PC-3 (cell line): ENCODE measurements at regions of chr6 and their contacts with region 1.

Region 1: DNA sequence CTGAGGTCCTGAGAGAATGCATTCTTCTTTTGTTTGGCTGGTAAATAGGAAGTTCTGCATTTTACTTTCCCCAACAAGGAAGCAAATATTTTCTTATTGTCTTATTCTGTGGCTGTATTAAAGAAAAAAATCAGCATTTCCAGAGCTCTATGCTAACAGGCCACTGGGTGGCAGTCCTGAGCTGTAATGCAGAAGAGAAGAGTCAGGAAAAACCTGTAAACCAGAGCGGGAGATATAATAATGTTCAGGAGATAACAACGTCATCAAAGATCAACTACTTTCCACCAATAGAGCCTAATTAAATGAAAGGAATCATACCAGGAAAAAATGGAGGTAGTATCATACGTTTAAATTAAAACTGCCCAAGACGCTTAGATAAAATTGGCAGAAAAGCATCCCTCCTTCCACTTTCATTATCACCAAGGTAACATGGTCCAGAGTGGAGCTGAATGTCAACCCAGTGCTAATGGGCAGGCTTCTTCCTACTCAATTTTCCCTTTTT is 55.6 kb upstream of the CARMIL1 start:
- DNase-seq: peak; percentile 82
- ATAC-seq: peak; percentile 77
- H3K4me3 ChIP-seq: peak overlapping the region; percentile 49
- H3K27ac ChIP-seq: no peak overlapping the region
- H3K4me1 ChIP-seq: no peaks in the 10 kb centered on the region
- H3K27me3 ChIP-seq: no peaks in the 10 kb centered on the region
- CTCF ChIP-seq: peak; percentile 97

Region 2: GRCh38 chr6:25122001-25122400 is 101.5 kb before region 1 on chr6:
- CTCF ChIA-PET with region 1: no interaction called
- POLR2A ChIA-PET with region 1: no interaction called
- intact Hi-C with region 1: loop called (anchors 5 kb)
- DNase-seq: no peak
- ATAC-seq: no peak
- H3K4me3 ChIP-seq: no peak overlapping the region
- H3K27ac ChIP-seq: no peak overlapping the region
- H3K4me1 ChIP-seq: no peaks in the 10 kb centered on the region
- H3K27me3 ChIP-seq: no peaks in the 10 kb centered on the region
- CTCF ChIP-seq: no peak

Region 3: GRCh38 chr6:25173951-25174474 is 49.5 kb before region 1 on chr6:
- CTCF ChIA-PET with region 1: interaction called, 16 read pairs
- POLR2A ChIA-PET with region 1: no interaction called
- intact Hi-C with region 1: no loop called
- DNase-seq: peak; percentile 96
- ATAC-seq: peak; percentile 84
- H3K4me3 ChIP-seq: no peak overlapping the region
- H3K27ac ChIP-seq: peak overlapping the region; percentile 81
- H3K4me1 ChIP-seq: peaks cover 57% of the 10 kb centered on the region
- H3K27me3 ChIP-seq: no peaks in the 10 kb centered on the region
- CTCF ChIP-seq: no peak

Region 4: GRCh38 chr6:25202505-25202904 is 21.0 kb before region 1 on chr6:
- CTCF ChIA-PET with region 1: no interaction called
- POLR2A ChIA-PET with region 1: no interaction called
- intact Hi-C with region 1: no loop called
- DNase-seq: peak; percentile 45
- ATAC-seq: peak; percentile 22; the same call in 1 of the 2 replicates
- H3K4me3 ChIP-seq: no peak overlapping the region
- H3K27ac ChIP-seq: no peak overlapping the region
- H3K4me1 ChIP-seq: peaks cover 6% of the 10 kb centered on the region; the same call in 1 of the 2 replicates
- H3K27me3 ChIP-seq: no peaks in the 10 kb centered on the region
- CTCF ChIP-seq: no peak

Region 5: GRCh38 chr6:25278914-25279747 is 55.6 kb after region 1 on chr6 and contains the start of gene CARMIL1:
- CTCF ChIA-PET with region 1: interaction called, 3 read pairs
- POLR2A ChIA-PET with region 1: no interaction called
- intact Hi-C with region 1: loop called (anchors 1 kb)
- DNase-seq: peak; percentile 90
- ATAC-seq: peak; percentile 76
- H3K4me3 ChIP-seq: peak within 1 kb of the TSS; percentile 84
- H3K27ac ChIP-seq: peak within 1 kb of the TSS; percentile 67
- H3K4me1 ChIP-seq: peaks cover 34% of the 10 kb centered on the region
- H3K27me3 ChIP-seq: no peaks in the 10 kb centered on the region
- CTCF ChIP-seq: peak; percentile 82
- total RNA-seq, gene CARMIL1: 17.0 and 22.0 TPM in 2 replicates

Region 6: GRCh38 chr6:25556516-25556915 is 333.0 kb after region 1 on chr6:
- CTCF ChIA-PET with region 1: interaction called, 3 read pairs
- POLR2A ChIA-PET with region 1: no interaction called
- intact Hi-C with region 1: loop called (anchors 1 kb)
- DNase-seq: peak; percentile 88
- ATAC-seq: peak; percentile 72
- H3K4me3 ChIP-seq: no peak overlapping the region
- H3K27ac ChIP-seq: no peak overlapping the region
- H3K4me1 ChIP-seq: peaks cover 9% of the 10 kb centered on the region
- H3K27me3 ChIP-seq: no peaks in the 10 kb centered on the region
- CTCF ChIP-seq: peak; percentile 93

Region 7: DNA sequence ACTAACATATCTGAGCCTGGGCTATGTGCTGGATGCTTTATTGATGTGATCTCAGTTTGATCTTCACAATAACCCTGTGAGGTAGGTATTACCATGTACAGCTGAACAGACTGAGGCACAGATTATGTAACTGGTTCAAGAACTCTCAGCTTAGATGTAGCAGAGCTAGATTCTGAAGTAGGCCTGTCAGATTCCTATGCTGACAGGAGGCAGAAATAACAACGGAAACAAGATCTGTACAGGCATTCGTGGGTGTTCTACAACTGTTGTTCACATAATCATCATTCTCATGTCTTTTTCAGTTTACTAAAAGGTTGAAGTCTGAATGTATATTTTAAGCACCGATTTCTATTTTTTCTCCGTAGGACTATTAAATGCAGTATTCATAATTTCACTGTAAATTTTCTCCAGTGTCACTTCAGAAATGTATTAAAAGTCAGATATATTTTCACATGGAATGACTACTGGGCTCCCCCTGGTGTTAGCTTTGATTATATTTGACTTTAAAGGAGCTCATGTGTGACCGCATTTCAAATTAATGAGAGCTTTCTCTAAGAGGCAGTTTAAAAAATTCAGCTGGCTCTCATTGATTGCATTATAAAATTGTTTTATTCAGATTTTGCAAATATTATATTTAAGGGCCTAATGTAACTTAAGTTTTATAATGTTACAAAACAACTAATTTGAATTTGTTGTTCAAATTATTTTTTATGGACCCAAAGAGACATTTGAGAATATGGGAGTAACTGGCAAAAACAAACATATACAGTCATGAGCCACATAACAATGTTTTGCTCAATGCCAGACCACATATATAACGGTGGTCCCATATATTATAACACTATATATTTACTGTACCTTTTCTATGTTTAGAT is 494.6 kb after region 1 on chr6:
- CTCF ChIA-PET with region 1: interaction called, 3 read pairs
- POLR2A ChIA-PET with region 1: no interaction called
- intact Hi-C with region 1: loop called (anchors 5 kb)
- DNase-seq: peak; percentile 67
- ATAC-seq: no peak; the same call in 1 of the 2 replicates
- H3K4me3 ChIP-seq: no peak overlapping the region
- H3K27ac ChIP-seq: no peak overlapping the region
- H3K4me1 ChIP-seq: no peaks in the 10 kb centered on the region
- H3K27me3 ChIP-seq: peaks cover 40% of the 10 kb centered on the region
- CTCF ChIP-seq: peak; percentile 79